A673 (cell line): ENCODE measurements at regions of chr21 and their contacts with region 1.

Region 1: DNA sequence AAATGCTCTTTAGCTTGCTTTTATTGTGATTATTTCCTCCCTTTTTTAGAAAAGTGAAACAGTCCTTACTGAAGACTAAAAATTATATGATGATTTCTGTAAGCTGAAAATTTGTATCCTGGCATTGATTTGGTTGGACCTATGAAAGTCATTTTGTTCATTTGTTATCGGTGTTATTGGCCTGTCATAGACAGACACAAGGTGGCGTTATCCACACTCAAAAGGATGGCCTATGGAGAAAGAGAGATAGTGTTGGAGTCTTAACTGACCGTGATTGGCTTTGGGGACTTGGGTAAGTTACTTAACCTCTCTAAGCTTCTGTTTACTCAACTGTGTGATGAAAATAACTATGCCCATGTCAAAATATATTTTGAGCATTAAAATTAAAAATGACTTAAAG is 203.6 kb upstream of the CHODL start:
- DNase-seq: peak; percentile 57
- H3K4me3 ChIP-seq: no peak overlapping the region
- H3K27ac ChIP-seq: no peak overlapping the region
- H3K4me1 ChIP-seq: no peaks in the 10 kb centered on the region
- H3K27me3 ChIP-seq: no peaks in the 10 kb centered on the region
- CTCF ChIP-seq: peak; percentile 69

Region 2: DNA sequence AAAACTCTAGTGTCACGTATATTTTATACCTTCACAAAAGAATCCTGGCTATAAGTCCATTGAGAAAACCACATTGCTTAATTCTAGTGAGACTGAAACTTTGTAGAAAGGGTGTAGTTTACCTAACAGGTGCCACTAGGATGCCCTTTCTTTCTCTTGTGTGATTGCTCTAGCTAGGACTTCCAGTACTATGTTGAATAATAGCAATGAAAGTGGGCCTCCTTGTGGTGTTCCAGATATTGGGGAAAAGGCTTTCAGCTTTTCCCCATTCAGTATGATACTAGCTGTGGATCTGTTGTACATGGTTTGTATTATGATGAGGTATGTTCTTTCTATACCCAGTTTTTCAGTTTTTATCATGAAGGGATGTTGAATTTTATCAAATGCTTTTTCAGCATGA is 163.9 kb after region 1 on chr21:
- CTCF ChIA-PET with region 1: interaction called, 7 read pairs
- POLR2A ChIA-PET with region 1: no interaction called
- intact Hi-C with region 1: loop called (anchors 1 kb)
- DNase-seq: peak; percentile 11
- H3K4me3 ChIP-seq: no peak overlapping the region
- H3K27ac ChIP-seq: no peak overlapping the region
- H3K4me1 ChIP-seq: no peaks in the 10 kb centered on the region
- H3K27me3 ChIP-seq: no peaks in the 10 kb centered on the region
- CTCF ChIP-seq: peak; percentile 25; the same call in 1 of the 2 replicates

Region 3: GRCh38 chr21:18265944-18266343 is 224.9 kb after region 1 on chr21:
- CTCF ChIA-PET with region 1: interaction called, 3 read pairs
- POLR2A ChIA-PET with region 1: no interaction called
- intact Hi-C with region 1: loop called (anchors 10 kb)
- DNase-seq: no peak
- H3K4me3 ChIP-seq: no peak overlapping the region
- H3K27ac ChIP-seq: no peak overlapping the region
- H3K4me1 ChIP-seq: no peaks in the 10 kb centered on the region
- H3K27me3 ChIP-seq: no peaks in the 10 kb centered on the region
- CTCF ChIP-seq: no peak